ENCODE measurements at regions of chr2 and their contacts with region 1.

Region 1: GRCh38 chr2:170973492-170974303 is 44.6 kb downstream of the GORASP2 start:
- DNase-seq: peak; percentile 84 to 85
- ATAC-seq: peak; percentile 95 to 98 (median 97)
- H3K4me3 ChIP-seq: peak overlapping the region; percentile 65 to 93 (median 72)
- H3K27ac ChIP-seq: peak overlapping the region; percentile 47 to 92 (median 82)
- H3K4me1 ChIP-seq: peaks cover 0 to 14% (median 10%) of the 10 kb centered on the region in 9 donors
- H3K27me3 ChIP-seq: no peaks in the 10 kb centered on the region
- CTCF ChIP-seq: peak; percentile 82 to 99 (median 94)

Region 2: DNA sequence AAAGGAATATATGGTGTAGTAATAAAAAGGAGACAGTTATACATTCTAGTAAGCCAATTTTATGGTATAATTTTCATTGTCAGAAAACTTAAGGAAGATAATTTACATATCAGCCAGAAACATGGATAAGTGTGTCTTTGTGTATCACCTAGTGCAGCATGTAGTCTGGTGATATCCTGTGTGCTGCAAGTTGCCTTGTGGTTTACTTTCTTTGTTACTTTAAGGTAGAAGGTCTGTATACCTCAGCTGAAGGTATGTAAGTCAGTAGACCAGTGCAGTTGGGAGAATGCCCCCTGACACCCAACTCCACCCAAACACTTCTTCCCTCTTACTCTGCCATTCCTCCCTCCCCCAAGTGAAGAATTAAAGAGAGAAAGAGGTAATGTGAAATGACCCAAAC is 33.6 kb before region 1 on chr2:
- intact Hi-C with region 1: no loop called
- DNase-seq: no peak
- ATAC-seq: no peak
- H3K4me3 ChIP-seq: no peak overlapping the region
- H3K27ac ChIP-seq: no peak overlapping the region
- H3K4me1 ChIP-seq: peaks cover 0 to 38% (median 16%) of the 10 kb centered on the region in 9 donors
- H3K27me3 ChIP-seq: no peaks in the 10 kb centered on the region
- CTCF ChIP-seq: no peak

Region 3: DNA sequence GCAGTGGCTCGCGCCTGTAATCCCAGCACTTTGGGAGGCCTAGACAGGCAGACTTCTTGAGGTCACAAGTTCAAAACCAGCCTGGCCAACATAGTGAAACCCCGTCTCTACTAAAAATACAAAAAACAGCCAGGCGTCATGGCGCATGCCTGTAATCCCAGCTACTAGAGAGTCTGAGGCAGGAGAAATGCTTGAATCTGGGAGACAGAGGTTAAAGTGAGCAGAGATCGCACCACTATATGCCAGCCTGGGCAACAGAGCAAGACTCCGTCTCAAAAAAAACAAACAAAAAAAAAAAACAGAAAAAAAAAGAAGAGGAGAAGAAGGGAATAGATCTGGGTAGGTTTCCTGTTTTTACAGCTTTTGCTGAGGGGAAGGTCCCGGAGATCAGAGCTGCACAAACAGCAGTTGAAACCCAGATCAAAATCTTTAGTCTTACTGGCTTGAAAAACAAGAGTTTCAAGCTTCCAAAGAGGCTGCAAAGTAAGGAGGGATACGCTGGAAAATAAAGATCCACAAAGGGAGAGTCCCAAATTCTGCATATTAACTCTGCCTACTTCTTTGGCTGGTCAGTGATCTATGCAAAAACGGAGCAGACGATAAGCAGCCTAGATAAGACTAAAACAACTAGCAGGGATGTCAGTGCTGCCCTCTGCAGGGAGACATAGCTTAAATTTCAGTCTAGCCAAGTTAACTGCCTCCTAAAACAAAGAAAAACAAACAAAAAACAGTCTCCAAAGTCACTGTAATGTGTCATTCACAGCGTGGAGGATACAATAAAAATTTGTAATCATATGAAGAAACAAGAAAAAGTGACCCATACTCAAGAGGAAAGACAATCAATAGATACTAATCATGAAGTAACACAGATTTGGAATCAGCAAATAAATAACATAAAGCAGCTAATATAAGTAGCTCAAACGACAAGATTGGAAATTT is 112.9 kb after region 1 on chr2:
- intact Hi-C with region 1: loop called in 1 of 10 experiments (anchors 5 kb)
- DNase-seq: peak in 1 of 2 donors; percentile 21
- ATAC-seq: peak in 5 of 8 donors; percentile 44 to 75 (median 58)
- H3K4me3 ChIP-seq: peak overlapping the region in 2 of 10 donors; percentile 6 to 17
- H3K27ac ChIP-seq: no peak overlapping the region
- H3K4me1 ChIP-seq: peaks cover 0 to 26% (median 12%) of the 10 kb centered on the region in 9 donors
- H3K27me3 ChIP-seq: no peaks in the 10 kb centered on the region
- CTCF ChIP-seq: peak; percentile 7 to 73 (median 54)

Region 4: DNA sequence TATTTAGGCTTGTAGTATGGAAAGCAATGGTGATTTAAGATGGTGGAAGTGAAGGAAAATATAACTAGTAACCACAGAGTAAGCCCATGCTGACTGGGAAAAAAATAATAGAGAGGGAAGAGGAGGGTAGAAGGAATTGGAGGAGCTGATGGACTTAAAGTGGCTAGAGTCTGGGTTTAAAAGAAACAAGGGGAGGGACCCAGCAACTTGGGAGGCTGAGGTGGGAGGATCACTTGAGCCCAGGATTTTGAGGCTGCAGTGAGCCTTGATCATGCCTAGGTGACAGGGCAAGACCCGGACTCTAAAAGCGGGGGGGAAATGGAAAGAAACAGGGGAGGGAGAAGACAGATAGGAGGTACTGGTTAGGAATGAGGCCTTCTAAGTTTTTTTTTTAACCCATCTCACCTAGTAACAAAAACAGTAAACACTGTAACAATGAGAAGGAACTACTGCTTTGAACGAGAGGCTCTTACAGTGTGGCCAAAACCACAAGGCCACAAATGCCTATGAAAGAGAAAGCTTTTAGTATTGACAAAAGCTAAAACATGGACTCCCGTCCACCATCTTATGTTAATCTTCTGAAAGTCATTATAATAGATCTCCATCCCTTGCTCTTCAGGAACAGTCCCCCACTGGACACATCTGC is 433.5 kb after region 1 on chr2:
- intact Hi-C with region 1: loop called in 1 of 10 experiments (anchors 5 kb)
- DNase-seq: no peak
- ATAC-seq: no peak
- H3K4me3 ChIP-seq: no peak overlapping the region
- H3K27ac ChIP-seq: no peak overlapping the region
- H3K4me1 ChIP-seq: peaks cover 0 to 11% (median 5%) of the 10 kb centered on the region in 9 donors
- H3K27me3 ChIP-seq: no peaks in the 10 kb centered on the region
- CTCF ChIP-seq: no peak